OCI-LY7 (cell line): ENCODE measurements at regions of chr18 and their contacts with region 1.

Region 1: GRCh38 chr18:14098467-14098866 is 33.8 kb downstream of the ZNF519 start:
- DNase-seq: no peak
- H3K4me3 ChIP-seq: no peak overlapping the region
- H3K27ac ChIP-seq: no peak overlapping the region
- H3K4me1 ChIP-seq: peaks cover 6% of the 10 kb centered on the region
- CTCF ChIP-seq: no peak

Region 2: DNA sequence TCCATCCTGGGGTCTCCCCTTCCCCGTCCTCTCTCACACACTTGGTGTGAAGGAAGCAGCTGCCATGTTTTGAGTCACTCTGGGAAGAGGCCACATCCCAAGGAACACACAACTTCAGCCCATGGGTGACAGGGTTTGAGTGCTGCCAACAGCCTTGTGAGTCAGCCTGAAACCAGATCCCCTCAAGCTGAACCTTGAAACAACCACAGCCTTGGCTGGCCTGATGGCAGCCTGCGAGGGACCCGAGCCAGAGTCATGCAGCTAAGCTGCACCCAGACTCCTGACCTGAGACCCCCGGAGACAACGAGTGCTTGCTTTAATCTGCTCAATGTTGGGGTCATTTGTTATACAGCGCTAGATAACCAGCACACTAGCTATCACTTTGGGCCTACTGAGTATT is 163.8 kb before region 1 on chr18:
- CTCF ChIA-PET with region 1: no interaction called
- POLR2A ChIA-PET with region 1: no interaction called
- intact Hi-C with region 1: no loop called
- DNase-seq: no peak
- H3K4me3 ChIP-seq: no peak overlapping the region
- H3K27ac ChIP-seq: no peak overlapping the region
- H3K4me1 ChIP-seq: no peaks in the 10 kb centered on the region
- CTCF ChIP-seq: no peak

Region 3: DNA sequence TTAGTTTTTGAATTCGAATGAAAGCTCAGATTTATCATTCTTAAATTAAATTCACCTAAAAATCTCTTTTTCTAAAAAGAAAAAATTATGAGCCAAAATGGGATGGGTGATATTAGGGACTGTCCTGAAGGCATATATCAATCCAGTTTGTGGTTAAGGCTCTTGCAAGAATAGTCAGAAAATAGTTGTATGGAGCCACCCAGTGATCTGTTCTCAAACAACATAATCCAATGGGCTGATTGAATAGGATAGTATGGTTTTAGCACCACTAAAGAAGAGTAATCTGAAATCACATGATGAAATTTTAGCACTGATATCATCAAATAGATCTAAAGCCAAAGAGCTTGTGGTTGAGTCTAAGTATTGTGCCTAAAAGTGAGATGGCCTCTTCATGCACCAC is 54.6 kb before region 1 on chr18:
- CTCF ChIA-PET with region 1: no interaction called
- POLR2A ChIA-PET with region 1: no interaction called
- intact Hi-C with region 1: loop called (anchors 5 kb)
- DNase-seq: no peak
- H3K4me3 ChIP-seq: no peak overlapping the region
- H3K27ac ChIP-seq: no peak overlapping the region
- H3K4me1 ChIP-seq: no peaks in the 10 kb centered on the region
- CTCF ChIP-seq: no peak

Region 4: DNA sequence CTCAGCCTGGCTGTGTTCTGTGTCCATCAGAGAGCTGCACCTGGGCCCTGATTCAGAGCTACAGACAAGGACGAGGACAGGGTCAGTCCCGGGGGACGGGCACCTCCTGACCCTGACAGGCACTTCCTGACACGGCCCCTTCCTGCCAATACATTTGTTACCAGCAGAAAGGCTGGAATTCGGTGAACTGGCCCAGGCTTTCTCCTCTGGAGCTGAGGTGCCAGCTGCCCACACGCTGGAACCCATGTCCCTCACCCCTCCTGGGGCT is 46.1 kb after region 1 on chr18:
- CTCF ChIA-PET with region 1: no interaction called
- POLR2A ChIA-PET with region 1: no interaction called
- intact Hi-C with region 1: no loop called
- DNase-seq: no peak
- H3K4me3 ChIP-seq: no peak overlapping the region
- H3K27ac ChIP-seq: no peak overlapping the region
- H3K4me1 ChIP-seq: no peaks in the 10 kb centered on the region
- CTCF ChIP-seq: no peak